T-cell (primary cell): ENCODE measurements at regions of chr1 and their contacts with region 1.

Region 1: DNA sequence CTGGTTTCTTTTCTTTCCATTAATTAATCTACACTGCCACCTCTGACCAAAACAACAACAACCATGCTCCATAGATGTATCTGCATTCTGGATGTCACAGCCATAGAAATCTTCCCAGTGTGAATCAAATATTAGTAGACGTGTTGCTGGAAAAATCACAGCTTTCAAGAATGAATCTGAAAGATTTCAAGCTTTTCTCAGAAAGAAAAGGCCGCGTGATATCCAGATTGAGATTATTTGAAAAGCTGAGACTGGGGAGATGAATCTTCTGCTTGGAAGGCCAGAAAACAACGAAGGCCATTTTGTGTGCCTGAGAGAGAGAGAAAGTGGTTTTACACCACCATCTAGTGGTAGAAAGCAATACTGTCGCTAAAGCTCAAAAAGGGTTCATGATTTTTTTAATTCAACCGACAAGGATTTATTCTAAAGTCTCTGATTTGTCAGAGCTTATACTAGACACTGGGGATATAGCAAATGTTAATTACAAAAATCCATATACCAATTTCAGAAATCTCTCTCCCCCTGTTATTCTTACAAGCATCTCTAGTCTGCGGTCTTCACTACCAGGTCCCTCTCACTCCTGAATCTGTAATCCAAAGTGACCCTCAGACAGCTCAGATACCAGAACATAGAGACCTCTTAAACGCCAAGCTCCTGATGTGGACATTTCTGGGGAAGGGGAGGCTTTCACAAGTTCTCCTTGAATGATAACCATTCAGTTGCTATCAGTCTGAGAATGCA is 87.5 kb upstream of the SGIP1 start:
- DNase-seq: peak in 22 of 35 experiments; percentile 5 to 88 (median 24)
- ATAC-seq: peak; percentile 60 to 68 (median 64)
- H3K4me3 ChIP-seq: no peak overlapping the region
- H3K4me3 Mint-ChIP-seq: peak overlapping the region; percentile 13 to 64 (median 59)
- H3K27ac ChIP-seq: peak overlapping the region; percentile 91
- H3K27ac Mint-ChIP-seq: peak overlapping the region; percentile 97
- H3K4me1 ChIP-seq: peaks cover 13 to 14% of the 10 kb centered on the region in 2 experiments
- H3K4me1 Mint-ChIP-seq: peaks cover 22 to 24% (median 23%) of the 10 kb centered on the region in 3 donors
- H3K27me3 ChIP-seq: no peaks in the 10 kb centered on the region
- H3K27me3 Mint-ChIP-seq: peaks cover 0 to 4% of the 10 kb centered on the region in 2 donors

Region 2: DNA sequence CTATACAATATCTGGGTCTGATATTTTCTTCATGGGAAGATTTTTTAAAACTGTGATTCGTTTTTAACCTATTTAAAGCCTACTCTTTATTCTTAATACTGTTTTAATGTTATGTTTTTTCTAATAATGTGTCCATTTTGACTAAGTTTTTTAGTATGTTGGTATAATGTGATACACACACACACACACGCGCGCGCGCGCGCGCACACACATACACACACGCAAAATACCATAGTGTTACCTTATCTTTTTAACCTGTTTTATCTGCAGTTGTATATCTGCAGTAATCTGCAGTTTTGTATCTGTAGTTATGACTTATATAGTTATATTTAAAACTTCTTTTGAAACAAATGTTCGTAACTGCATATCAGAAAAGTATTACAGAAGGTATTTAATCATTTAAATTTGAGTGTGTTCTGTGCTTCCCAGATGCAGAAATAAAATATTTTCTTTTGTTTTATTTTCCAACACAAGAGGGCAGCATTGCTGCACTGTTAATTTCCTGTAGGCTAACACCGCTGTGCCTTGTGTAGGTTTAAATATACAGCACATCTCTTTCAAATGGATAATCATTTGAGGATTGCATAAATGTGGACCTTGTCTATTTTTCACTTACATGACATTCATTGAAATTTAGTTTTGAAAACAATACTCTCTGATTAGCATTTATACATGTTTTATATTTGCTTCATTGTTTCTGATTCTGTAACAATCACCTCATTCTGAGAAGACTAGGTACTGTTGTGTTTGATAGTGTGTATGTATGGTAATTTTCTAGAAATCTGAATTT is 487.7 kb before region 1 on chr1:
- CTCF ChIA-PET with region 1: interaction called, 29 to 53 read pairs
- POLR2A ChIA-PET with region 1: interaction called in 1 of 2 experiments, 3 read pairs
- DNase-seq: peak in 21 of 35 experiments; percentile 1 to 73 (median 13)
- ATAC-seq: peak in 1 of 4 experiments; percentile 61
- H3K4me3 ChIP-seq: no peak overlapping the region
- H3K4me3 Mint-ChIP-seq: no peak overlapping the region
- H3K27ac ChIP-seq: no peak overlapping the region
- H3K27ac Mint-ChIP-seq: no peak overlapping the region
- H3K4me1 ChIP-seq: no peaks in the 10 kb centered on the region
- H3K4me1 Mint-ChIP-seq: no peaks in the 10 kb centered on the region
- H3K27me3 ChIP-seq: peaks cover 0 to 2% of the 10 kb centered on the region in 2 experiments
- H3K27me3 Mint-ChIP-seq: no peaks in the 10 kb centered on the region

Region 3: DNA sequence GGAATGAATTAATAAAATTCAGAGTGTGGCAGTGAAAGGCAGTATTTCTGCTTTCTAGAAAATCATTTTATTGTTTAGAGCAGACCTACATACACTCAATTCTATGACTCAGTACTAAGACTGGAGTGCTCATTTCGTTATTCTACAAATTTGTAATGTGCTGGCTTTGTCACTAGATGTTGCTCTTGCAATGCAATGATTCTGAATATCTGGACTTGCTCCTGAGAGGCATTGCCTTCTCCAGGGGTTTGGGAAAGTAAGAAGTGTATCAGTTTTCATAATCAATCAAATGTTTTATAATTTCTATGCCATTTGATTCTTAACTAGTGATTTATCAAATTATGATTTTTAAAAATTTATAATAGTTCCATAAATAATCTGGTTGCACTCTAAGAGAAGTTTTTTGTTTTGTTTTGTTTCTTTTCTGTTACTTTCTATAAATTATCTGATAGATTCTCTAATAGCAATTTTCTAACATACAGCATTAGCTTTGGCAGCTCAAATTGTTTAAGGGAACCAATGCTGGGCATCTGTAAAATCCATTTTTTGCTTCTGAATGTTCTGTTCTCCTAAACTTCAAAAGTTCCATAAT is 193.0 kb before region 1 on chr1:
- CTCF ChIA-PET with region 1: interaction called, 70 to 320 read pairs
- POLR2A ChIA-PET with region 1: interaction called in 1 of 2 experiments, 4 read pairs
- DNase-seq: peak in 2 of 35 experiments; percentile 29 to 71
- ATAC-seq: peak; percentile 71 to 87 (median 80)
- H3K4me3 ChIP-seq: no peak overlapping the region
- H3K4me3 Mint-ChIP-seq: no peak overlapping the region
- H3K27ac ChIP-seq: no peak overlapping the region
- H3K27ac Mint-ChIP-seq: no peak overlapping the region
- H3K4me1 ChIP-seq: peaks cover 0 to 10% of the 10 kb centered on the region in 2 experiments
- H3K4me1 Mint-ChIP-seq: peaks cover 19 to 40% (median 23%) of the 10 kb centered on the region in 3 donors
- H3K27me3 ChIP-seq: no peaks in the 10 kb centered on the region
- H3K27me3 Mint-ChIP-seq: no peaks in the 10 kb centered on the region

Region 4: DNA sequence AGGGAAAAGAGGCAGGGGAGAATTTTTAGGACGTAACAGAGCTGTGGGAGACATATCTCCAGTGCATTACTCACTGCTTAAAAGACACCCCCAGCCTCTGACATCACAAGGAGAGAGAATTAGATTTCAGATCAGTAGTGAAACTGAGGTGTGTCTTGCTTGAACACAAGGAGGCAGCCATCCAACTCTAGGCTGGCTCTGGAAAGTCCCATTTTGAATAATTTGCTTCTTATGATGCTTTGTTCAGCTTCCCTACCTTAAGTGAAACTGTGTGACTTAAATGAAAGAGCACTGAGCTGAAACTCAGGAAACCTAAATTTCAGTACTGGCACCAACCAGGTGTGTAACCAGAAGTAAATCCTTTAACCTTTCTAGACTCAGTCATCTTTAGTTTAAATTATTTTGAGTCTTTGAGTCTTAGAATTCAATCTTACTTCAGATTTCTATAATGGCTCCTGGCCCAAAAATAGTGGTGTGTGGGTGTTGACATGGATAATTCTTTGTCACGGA is 164.0 kb before region 1 on chr1:
- CTCF ChIA-PET with region 1: interaction called, 3 to 24 read pairs
- POLR2A ChIA-PET with region 1: interaction called in 1 of 2 experiments, 3 read pairs
- DNase-seq: peak in 34 of 35 experiments; percentile 25 to 87 (median 58)
- ATAC-seq: peak; percentile 77 to 96 (median 84)
- H3K4me3 ChIP-seq: no peak overlapping the region
- H3K4me3 Mint-ChIP-seq: peak overlapping the region in 1 of 3 donors; percentile 23
- H3K27ac ChIP-seq: peak overlapping the region; percentile 61
- H3K27ac Mint-ChIP-seq: peak overlapping the region; percentile 84 to 87
- H3K4me1 ChIP-seq: peaks cover 27 to 52% of the 10 kb centered on the region in 2 experiments
- H3K4me1 Mint-ChIP-seq: peaks cover 87 to 94% (median 88%) of the 10 kb centered on the region in 3 donors
- H3K27me3 ChIP-seq: no peaks in the 10 kb centered on the region
- H3K27me3 Mint-ChIP-seq: no peaks in the 10 kb centered on the region

Region 5: DNA sequence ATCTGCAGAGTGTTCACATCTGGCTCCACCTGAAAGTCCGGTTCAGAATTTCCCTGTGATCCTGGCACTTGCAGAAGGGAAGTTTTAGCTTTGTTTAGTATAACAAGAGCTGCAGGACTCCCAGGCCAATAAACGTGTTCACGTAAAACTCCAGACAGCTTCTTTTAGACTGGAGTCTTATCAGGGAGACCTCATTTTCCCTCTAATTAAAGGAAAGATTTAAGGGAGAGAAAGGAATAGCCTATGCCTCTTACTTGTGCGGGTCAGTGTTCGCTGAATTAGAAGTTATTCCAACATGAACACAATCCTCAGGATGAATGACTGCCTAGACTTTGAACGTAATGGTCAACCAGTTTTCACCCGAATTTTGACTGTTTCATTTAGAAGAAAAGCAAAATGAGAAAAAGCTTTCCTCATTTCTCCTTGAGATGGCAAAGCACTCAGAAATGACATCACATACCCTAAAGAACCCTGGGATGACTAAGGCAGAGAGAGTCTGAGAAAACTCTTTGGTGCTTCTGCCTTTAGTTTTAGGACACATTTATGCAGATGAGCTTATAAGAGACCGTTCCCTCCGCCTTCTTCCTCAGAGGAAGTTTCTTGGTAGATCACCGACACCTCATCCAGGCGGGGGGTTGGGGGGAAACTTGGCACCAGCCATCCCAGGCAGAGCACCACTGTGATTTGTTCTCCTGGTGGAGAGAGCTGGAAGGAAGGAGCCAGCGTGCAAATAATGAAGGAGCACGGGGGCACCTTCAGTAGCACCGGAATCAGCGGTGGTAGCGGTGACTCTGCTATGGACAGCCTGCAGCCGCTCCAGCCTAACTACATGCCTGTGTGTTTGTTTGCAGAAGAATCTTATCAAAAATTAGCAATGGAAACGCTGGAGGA is 114.5 kb before region 1 on chr1:
- CTCF ChIA-PET with region 1: interaction called in 1 of 2 experiments, 15 read pairs
- POLR2A ChIA-PET with region 1: interaction called in 1 of 2 experiments, 4 read pairs
- DNase-seq: peak in 28 of 35 experiments; percentile 17 to 62 (median 36)
- ATAC-seq: peak; percentile 11 to 29 (median 24)
- H3K4me3 ChIP-seq: peak overlapping the region; percentile 77 to 91
- H3K4me3 Mint-ChIP-seq: peak overlapping the region; percentile 96 to 99 (median 98)
- H3K27ac ChIP-seq: peak overlapping the region; percentile 95
- H3K27ac Mint-ChIP-seq: peak overlapping the region; percentile 98
- H3K4me1 ChIP-seq: peaks cover 36 to 41% of the 10 kb centered on the region in 2 experiments
- H3K4me1 Mint-ChIP-seq: peaks cover 57 to 74% (median 60%) of the 10 kb centered on the region in 3 donors
- H3K27me3 ChIP-seq: no peaks in the 10 kb centered on the region
- H3K27me3 Mint-ChIP-seq: no peaks in the 10 kb centered on the region